ENCODE measurements at regions of chr16 and their contacts with region 1.

Region 1: GRCh38 chr16:27169511-27170071 is 33.7 kb upstream of the KDM8 start:
- DNase-seq: peak; percentile 81
- H3K4me3 Mint-ChIP-seq: peak overlapping the region; percentile 26
- H3K27ac Mint-ChIP-seq: peak overlapping the region; percentile 83
- H3K4me1 Mint-ChIP-seq: peaks cover 64% of the 10 kb centered on the region
- H3K27me3 Mint-ChIP-seq: peaks cover 10% of the 10 kb centered on the region

Region 2: DNA sequence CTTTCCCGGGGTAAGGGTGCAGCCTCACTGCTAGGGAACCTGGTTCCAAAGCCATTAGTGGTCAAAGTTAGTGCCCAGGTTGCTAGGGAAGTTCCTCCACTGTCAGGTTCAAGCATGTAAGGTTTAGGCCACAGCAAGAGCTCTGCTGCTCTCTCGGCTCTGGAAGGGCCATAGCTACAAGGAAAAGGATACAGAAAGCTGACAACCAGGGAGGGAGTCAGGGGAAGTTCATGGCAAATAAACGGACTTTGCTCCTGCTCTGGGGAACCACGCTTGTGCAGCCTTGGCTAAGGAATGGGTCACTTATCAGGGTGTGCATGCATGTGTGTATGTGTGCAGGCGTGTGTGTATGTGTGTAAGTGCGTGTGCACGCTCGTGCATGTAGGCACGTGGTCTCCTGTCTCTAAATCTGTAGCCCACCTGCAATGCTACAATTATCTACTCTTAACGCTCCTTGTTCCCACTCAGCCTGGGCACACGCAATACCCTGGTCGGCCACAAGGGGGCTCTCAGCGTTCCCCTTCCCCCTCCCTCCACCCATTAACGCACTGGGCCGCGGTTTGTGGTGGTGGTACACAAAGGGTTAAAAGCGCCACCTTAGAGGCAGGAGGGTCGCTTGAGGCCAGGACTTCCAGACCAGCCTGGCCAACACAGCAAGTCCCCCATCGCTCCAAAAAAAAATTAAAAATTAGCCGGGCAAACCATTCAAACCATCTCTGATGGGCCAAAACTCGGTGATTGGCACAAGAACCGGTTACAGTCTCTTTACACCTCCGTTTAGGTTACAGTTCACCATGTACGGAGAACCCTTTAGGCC is 14.7 kb before region 1 on chr16:
- CTCF ChIA-PET with region 1: interaction called, 35 read pairs
- POLR2A ChIA-PET with region 1: interaction called, 8 read pairs
- DNase-seq: peak; percentile 69
- H3K4me3 Mint-ChIP-seq: no peak overlapping the region
- H3K27ac Mint-ChIP-seq: no peak overlapping the region
- H3K4me1 Mint-ChIP-seq: peaks cover 9% of the 10 kb centered on the region
- H3K27me3 Mint-ChIP-seq: no peaks in the 10 kb centered on the region

Region 3: GRCh38 chr16:27195941-27196595 is 26.5 kb after region 1 on chr16:
- CTCF ChIA-PET with region 1: interaction called, 14 read pairs
- POLR2A ChIA-PET with region 1: interaction called, 14 read pairs
- DNase-seq: peak; percentile 41
- H3K4me3 Mint-ChIP-seq: no peak overlapping the region
- H3K27ac Mint-ChIP-seq: peak overlapping the region; percentile 82
- H3K4me1 Mint-ChIP-seq: peaks cover 62% of the 10 kb centered on the region
- H3K27me3 Mint-ChIP-seq: no peaks in the 10 kb centered on the region

Region 4: GRCh38 chr16:27203429-27204231 is 34.0 kb after region 1 on chr16 and contains the start of gene KDM8:
- CTCF ChIA-PET with region 1: interaction called, 9 read pairs
- POLR2A ChIA-PET with region 1: interaction called, 16 read pairs
- DNase-seq: peak; percentile 100
- H3K4me3 Mint-ChIP-seq: peak within 1 kb of the TSS; percentile 95
- H3K27ac Mint-ChIP-seq: peak within 1 kb of the TSS; percentile 99
- H3K4me1 Mint-ChIP-seq: peaks cover 56% of the 10 kb centered on the region
- H3K27me3 Mint-ChIP-seq: no peaks in the 10 kb centered on the region
- total RNA-seq, gene KDM8: 12.7 to 14.3 TPM

Region 5: GRCh38 chr16:27318392-27319226 is 149.0 kb after region 1 on chr16:
- CTCF ChIA-PET with region 1: interaction called, 6 read pairs
- POLR2A ChIA-PET with region 1: interaction called, 21 read pairs
- DNase-seq: peak; percentile 72
- H3K4me3 Mint-ChIP-seq: peak overlapping the region; percentile 97
- H3K27ac Mint-ChIP-seq: peak overlapping the region; percentile 98
- H3K4me1 Mint-ChIP-seq: peaks cover 75% of the 10 kb centered on the region
- H3K27me3 Mint-ChIP-seq: no peaks in the 10 kb centered on the region

Measured in activated CD4-positive, alpha-beta memory T cell treated with anti-CD3 and anti-CD28 coated beads, Interleukin-2, amount 10 ng/mL, durations not matched to agents 7 days and 5 days (primary cell).